Activated CD4-positive, alpha-beta memory T cell treated with anti-CD3 and anti-CD28 coated beads, Interleukin-2, amount 10 ng/mL, durations not matched to agents 7 days and 5 days (primary cell): ENCODE measurements at regions of chr7 and their contacts with region 1.

Region 1: GRCh38 chr7:127392566-127393367 is at the start of gene ZNF800:
- DNase-seq: peak; percentile 88
- H3K4me3 Mint-ChIP-seq: peak within 1 kb of the TSS; percentile 99
- H3K27ac Mint-ChIP-seq: peak within 1 kb of the TSS; percentile 98
- H3K4me1 Mint-ChIP-seq: peaks cover 56% of the 10 kb centered on the region
- H3K27me3 Mint-ChIP-seq: no peaks in the 10 kb centered on the region
- total RNA-seq, gene ZNF800: 37.2 to 38.0 TPM

Region 2: GRCh38 chr7:127365164-127365956 is 27.4 kb before region 1 on chr7:
- CTCF ChIA-PET with region 1: no interaction called
- POLR2A ChIA-PET with region 1: interaction called, 11 read pairs
- DNase-seq: no peak
- H3K4me3 Mint-ChIP-seq: no peak overlapping the region
- H3K27ac Mint-ChIP-seq: no peak overlapping the region
- H3K4me1 Mint-ChIP-seq: peaks cover 9% of the 10 kb centered on the region
- H3K27me3 Mint-ChIP-seq: no peaks in the 10 kb centered on the region

Region 3: DNA sequence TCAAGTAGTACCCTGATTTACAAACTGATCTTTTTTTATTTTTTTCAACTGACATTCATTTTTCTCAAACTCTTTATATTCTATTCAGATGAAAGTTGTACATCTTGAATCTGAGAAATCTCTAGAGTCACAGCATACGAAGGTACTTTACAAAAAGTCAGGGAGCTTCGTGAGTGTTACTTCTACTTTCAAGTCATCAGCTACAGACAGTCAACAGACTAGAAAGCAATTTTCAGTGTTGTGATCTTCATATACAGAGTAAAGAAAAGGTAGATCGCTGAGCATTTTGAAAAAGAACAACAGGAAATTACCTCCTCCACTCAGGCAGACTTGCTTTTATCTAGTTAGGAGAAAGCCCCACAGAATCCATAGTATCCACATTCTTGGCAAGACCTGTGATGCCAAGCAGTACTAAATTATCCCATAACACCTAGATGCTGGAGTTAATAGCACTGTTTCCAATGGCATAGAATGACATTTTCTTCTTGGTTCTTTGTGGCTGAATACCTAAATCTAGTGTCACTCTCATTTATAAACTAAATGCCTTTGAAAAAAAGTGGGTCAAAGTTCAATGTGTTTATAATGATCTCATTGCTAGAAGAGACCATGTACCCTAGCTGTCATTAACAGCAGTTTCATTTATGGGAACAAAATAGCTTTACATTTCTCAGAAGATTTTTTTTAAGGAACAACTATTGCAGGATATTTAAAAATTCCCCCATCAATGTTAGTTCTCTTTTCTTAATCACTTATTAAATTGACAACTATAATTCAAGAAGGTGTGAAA is 11.7 kb after region 1 on chr7:
- CTCF ChIA-PET with region 1: interaction called, 5 read pairs
- POLR2A ChIA-PET with region 1: interaction called, 23 read pairs
- DNase-seq: no peak
- H3K4me3 Mint-ChIP-seq: no peak overlapping the region
- H3K27ac Mint-ChIP-seq: no peak overlapping the region
- H3K4me1 Mint-ChIP-seq: peaks cover 5% of the 10 kb centered on the region
- H3K27me3 Mint-ChIP-seq: peaks cover 14% of the 10 kb centered on the region

Region 4: GRCh38 chr7:127447326-127447945 is 54.7 kb after region 1 on chr7:
- CTCF ChIA-PET with region 1: interaction called, 10 read pairs
- POLR2A ChIA-PET with region 1: interaction called, 12 read pairs
- DNase-seq: peak; percentile 60
- H3K4me3 Mint-ChIP-seq: no peak overlapping the region
- H3K27ac Mint-ChIP-seq: no peak overlapping the region
- H3K4me1 Mint-ChIP-seq: peaks cover 12% of the 10 kb centered on the region
- H3K27me3 Mint-ChIP-seq: peaks cover 36% of the 10 kb centered on the region

Region 5: DNA sequence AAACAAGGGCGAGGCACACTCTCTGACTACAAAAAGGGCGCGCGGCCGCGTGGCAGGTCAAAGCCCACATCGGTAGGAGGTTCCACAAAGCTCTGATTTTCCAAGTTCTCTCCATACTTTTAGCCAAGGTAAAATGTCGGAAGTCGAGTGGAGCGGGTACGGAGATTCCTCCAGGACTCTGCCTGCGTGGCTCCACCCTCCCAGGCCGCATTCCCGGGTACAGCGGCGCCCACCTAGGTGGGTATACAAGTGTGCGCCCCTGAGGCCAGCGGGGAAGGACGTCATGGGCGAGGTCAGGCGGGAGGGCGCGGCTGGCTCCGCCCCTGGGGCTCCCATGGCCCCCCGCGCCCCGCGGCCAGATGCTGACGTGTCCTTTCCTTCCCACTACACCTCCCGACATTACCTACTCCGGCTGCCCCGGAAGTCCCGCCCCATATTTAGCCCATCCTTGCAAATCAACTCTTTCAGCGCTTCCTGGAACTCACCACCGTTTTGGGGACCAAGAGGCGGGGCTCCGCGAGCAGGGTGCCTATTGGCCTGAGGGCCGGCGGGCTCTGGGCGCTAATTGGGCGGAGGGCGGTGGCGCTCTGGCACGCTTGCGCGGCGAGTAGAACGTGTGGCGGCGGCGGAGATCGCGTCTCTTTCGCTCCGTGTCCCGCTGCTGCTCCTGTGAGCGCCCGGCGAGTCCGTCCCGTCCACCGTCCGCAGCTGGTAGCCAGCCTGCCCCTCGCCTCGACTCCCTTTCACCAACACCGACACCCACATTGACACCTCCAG is 259.0 kb after region 1 on chr7 and contains the start of gene SND1:
- CTCF ChIA-PET with region 1: no interaction called
- POLR2A ChIA-PET with region 1: interaction called, 11 read pairs
- DNase-seq: peak; percentile 99
- H3K4me3 Mint-ChIP-seq: peak within 1 kb of the TSS; percentile 98
- H3K27ac Mint-ChIP-seq: peak within 1 kb of the TSS; percentile 95
- H3K4me1 Mint-ChIP-seq: peaks cover 37% of the 10 kb centered on the region
- H3K27me3 Mint-ChIP-seq: no peaks in the 10 kb centered on the region
- total RNA-seq, gene SND1: 171 to 175 TPM